CD4-positive, alpha-beta T cell (primary cell): ENCODE measurements at regions of chr17 and their contacts with region 1.

Region 1: DNA sequence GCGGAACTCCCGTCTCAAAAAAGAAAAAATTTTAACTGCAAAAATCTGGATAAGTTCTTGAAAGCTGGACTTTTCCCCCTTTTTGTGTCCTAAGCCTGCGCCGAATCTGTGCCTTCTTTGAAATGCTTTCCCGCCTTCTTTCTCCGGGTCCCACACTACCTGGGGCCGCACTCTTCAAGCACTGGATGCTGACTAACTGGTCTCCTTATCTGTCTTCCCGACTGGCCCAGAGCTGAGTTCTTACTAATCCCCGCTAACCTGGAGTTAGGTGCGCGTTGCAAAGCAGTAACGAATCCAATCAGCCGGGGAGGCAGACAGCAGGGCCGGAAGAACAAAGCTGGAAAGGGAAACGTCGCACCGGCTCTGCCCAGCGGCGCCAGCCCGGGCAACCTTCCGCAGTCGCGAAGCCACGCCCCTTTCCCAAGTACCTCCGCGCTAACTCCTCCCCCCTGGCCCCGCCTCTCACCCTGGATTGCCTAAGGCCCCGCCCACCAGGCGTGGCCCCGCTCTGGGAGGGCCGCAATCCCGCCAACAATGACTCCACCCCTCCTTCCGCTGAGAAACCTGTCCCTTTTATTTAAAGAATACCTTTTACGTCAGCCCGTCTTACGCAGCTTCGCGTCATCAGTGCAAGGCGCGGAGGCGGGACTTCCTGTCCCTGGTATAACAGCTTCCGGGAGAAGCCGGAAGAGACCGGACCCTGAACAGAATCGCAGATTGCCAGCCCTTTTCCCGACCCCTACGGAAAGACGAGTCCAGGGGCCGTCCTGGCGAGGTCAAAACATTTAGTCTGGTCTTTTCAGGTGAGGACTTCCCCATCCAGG is at the start of gene TMUB2:
- DNase-seq: peak; percentile 99 to 100 (median 99)
- ATAC-seq: peak; percentile 92
- H3K4me3 ChIP-seq: peak within 1 kb of the TSS; percentile 90
- H3K4me3 Mint-ChIP-seq: peak within 1 kb of the TSS; percentile 98
- H3K27ac ChIP-seq: peak within 1 kb of the TSS; percentile 97 to 99
- H3K27ac Mint-ChIP-seq: peak within 1 kb of the TSS; percentile 96
- H3K4me1 ChIP-seq: peaks cover 64% of the 10 kb centered on the region
- H3K4me1 Mint-ChIP-seq: peaks cover 54% of the 10 kb centered on the region
- H3K27me3 ChIP-seq: no peaks in the 10 kb centered on the region
- H3K27me3 Mint-ChIP-seq: no peaks in the 10 kb centered on the region
- CTCF ChIP-seq: no peak
- total RNA-seq, gene TMUB2: 33.3 to 34.8 TPM

Region 2: DNA sequence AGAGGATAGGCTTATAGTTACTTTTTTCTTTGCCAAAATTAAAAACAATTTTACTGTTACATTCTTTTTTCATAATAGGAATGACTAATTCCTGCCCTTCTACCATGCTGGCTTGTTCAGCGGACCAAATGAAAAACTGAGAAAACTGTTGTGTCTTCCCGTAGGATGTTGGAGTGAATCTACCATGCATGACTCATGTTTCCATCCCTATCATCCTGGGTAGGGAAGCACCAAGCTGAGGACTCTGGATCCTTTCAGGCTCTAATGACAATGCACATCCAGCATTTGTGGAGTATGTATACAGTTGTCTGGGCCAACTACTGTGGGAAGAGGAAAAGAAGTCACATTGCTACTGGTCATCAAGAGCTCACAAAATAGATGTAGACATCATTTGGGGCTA is 743.8 kb before region 1 on chr17:
- CTCF ChIA-PET with region 1: no interaction called
- POLR2A ChIA-PET with region 1: no interaction called
- intact Hi-C with region 1: no loop called
- DNase-seq: no peak
- ATAC-seq: no peak
- H3K4me3 ChIP-seq: no peak overlapping the region
- H3K4me3 Mint-ChIP-seq: no peak overlapping the region
- H3K27ac ChIP-seq: no peak overlapping the region
- H3K27ac Mint-ChIP-seq: no peak overlapping the region
- H3K4me1 ChIP-seq: no peaks in the 10 kb centered on the region
- H3K4me1 Mint-ChIP-seq: no peaks in the 10 kb centered on the region
- H3K27me3 ChIP-seq: peaks cover 0 to 4% of the 10 kb centered on the region in 2 experiments
- H3K27me3 Mint-ChIP-seq: peaks cover 15% of the 10 kb centered on the region
- CTCF ChIP-seq: no peak

Region 3: DNA sequence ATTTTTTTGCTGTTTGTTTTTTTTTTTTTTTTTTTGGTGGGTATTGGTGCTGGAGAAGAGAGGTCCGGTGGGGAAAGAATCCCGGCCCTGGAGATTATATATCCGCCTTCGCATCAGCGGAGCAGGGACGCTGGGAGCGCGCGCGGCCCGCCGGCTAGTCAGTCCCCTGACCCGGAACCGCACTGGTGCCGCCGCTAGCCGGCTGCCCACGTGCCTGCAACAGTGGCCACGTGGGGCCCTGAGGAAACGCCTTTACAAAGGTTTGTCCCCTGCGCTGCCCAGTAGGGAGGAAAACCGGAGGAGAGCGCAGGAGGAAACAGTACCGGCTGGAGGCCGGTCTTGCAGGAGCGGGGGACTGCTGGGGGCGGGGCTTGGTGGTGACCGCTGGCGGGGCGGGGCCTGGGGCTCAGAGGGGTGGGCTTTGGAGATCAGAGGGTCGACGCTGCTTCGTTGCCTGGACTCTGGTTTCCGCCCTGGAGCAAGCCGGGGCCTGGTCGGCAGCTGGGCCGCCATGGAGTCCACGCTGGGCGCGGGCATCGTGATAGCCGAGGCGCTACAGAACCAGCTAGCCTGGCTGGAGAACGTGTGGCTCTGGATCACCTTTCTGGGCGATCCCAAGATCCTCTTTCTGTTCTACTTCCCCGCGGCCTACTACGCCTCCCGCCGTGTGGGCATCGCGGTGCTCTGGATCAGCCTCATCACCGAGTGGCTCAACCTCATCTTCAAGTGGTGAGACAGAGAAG is 115.9 kb before region 1 on chr17 and contains the start of gene G6PC3:
- CTCF ChIA-PET with region 1: no interaction called
- POLR2A ChIA-PET with region 1: interaction called, 8 read pairs
- intact Hi-C with region 1: loop called in 1 of 2 experiments (anchors 5 kb)
- DNase-seq: peak; percentile 34 to 88 (median 60)
- ATAC-seq: peak; percentile 32
- H3K4me3 ChIP-seq: peak within 1 kb of the TSS; percentile 77
- H3K4me3 Mint-ChIP-seq: peak within 1 kb of the TSS; percentile 95
- H3K27ac ChIP-seq: peak within 1 kb of the TSS; percentile 61 to 71
- H3K27ac Mint-ChIP-seq: peak within 1 kb of the TSS; percentile 91
- H3K4me1 ChIP-seq: peaks cover 37% of the 10 kb centered on the region
- H3K4me1 Mint-ChIP-seq: peaks cover 49% of the 10 kb centered on the region
- H3K27me3 ChIP-seq: no peaks in the 10 kb centered on the region
- H3K27me3 Mint-ChIP-seq: no peaks in the 10 kb centered on the region
- CTCF ChIP-seq: no peak
- total RNA-seq, gene G6PC3: 5.6 to 5.8 TPM

Region 4: DNA sequence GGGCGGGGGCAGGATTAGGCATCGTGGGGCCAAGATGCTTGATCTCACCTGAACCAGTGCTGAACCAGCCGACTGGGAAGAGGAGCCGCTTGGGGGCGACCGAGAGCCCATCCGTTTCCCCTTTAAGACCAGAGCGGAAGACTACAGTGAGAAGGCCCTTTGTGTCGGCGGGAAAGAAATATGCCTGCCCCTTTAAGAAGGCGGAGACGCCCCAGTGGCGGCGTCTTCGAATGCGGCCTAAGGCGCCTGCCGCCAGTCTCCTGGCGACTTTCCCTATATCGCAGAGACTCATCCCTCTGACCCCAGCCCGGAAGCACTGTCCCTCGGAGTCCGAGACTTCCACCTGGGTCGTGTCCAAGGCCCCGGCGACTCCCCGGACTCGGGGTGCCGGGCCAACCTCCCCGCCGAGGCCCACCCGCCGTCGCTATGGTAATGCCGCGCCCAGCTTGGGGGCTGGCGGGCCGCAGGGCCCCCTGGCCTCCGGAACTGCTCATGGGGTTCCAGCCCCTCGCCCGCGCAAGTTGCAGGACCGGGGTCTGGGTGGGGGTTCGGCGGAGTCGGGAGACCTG is 44.7 kb before region 1 on chr17 and contains the start of gene HROB:
- CTCF ChIA-PET with region 1: no interaction called
- POLR2A ChIA-PET with region 1: interaction called, 7 read pairs
- intact Hi-C with region 1: loop called (anchors 1 to 2 kb)
- DNase-seq: peak; percentile 95 to 100 (median 98)
- ATAC-seq: peak; percentile 93
- H3K4me3 ChIP-seq: peak within 1 kb of the TSS; percentile 59
- H3K4me3 Mint-ChIP-seq: peak within 1 kb of the TSS; percentile 84
- H3K27ac ChIP-seq: peak within 1 kb of the TSS; percentile 41 to 59
- H3K27ac Mint-ChIP-seq: peak within 1 kb of the TSS; percentile 68
- H3K4me1 ChIP-seq: peaks cover 19% of the 10 kb centered on the region
- H3K4me1 Mint-ChIP-seq: peaks cover 7% of the 10 kb centered on the region
- H3K27me3 ChIP-seq: peaks cover 8 to 12% of the 10 kb centered on the region in 2 experiments
- H3K27me3 Mint-ChIP-seq: peaks cover 17% of the 10 kb centered on the region
- CTCF ChIP-seq: peak; percentile 86
- total RNA-seq, gene HROB: 1.6 TPM

Region 5: GRCh38 chr17:44199553-44200477 is 13.3 kb after region 1 on chr17 and contains the start of gene ATXN7L3:
- CTCF ChIA-PET with region 1: interaction called, 4 read pairs
- POLR2A ChIA-PET with region 1: interaction called, 99 read pairs
- intact Hi-C with region 1: loop called (anchors 1 kb)
- DNase-seq: peak; percentile 99 to 100 (median 99)
- ATAC-seq: peak; percentile 80
- H3K4me3 ChIP-seq: peak within 1 kb of the TSS; percentile 94
- H3K4me3 Mint-ChIP-seq: peak within 1 kb of the TSS; percentile 93
- H3K27ac ChIP-seq: peak within 1 kb of the TSS; percentile 83 to 87
- H3K27ac Mint-ChIP-seq: peak within 1 kb of the TSS; percentile 93
- H3K4me1 ChIP-seq: peaks cover 45% of the 10 kb centered on the region
- H3K4me1 Mint-ChIP-seq: peaks cover 46% of the 10 kb centered on the region
- H3K27me3 ChIP-seq: no peaks in the 10 kb centered on the region
- H3K27me3 Mint-ChIP-seq: no peaks in the 10 kb centered on the region
- CTCF ChIP-seq: no peak
- total RNA-seq, gene ATXN7L3: 85.2 to 99.2 TPM

Region 6: DNA sequence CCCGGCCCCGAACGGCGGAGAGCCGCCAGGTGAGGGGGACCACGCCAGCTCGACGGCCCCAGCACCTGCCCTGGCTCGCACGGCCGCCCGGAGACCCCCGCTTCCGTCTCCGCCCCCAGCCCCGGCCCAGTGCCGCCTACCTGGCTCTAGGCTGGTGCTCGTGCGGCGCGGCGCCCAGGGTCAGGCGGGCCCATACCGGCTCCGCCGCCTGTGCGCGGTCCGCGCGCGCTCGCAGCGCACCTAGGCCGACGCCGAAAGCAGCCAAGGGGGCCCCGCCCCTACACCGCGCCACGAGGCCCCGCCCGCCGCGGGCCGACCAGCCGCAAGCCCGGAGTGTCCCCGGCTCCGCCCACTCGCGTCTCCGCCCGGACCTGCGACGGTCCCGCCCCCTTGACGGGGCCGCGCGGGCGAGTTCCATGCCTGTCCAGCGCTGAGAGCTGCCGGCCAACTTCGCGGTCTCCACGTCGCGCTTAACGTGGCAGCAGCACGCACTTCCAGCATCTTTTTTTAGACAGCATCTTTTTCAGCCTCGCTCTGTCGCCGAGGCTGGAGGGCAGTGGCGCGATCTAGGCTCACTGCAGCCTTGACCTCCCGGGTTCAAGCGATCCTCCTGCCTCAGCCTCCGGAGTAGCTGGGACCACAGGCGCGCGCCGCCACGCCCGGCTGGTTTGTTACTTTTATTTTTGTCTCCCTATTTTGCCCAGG is 138.2 kb after region 1 on chr17 and contains the start of gene SLC25A39:
- CTCF ChIA-PET with region 1: no interaction called
- POLR2A ChIA-PET with region 1: interaction called, 17 read pairs
- intact Hi-C with region 1: loop called in 1 of 2 experiments (anchors 1 kb)
- DNase-seq: peak; percentile 87 to 97 (median 94)
- ATAC-seq: peak; percentile 69
- H3K4me3 ChIP-seq: peak within 1 kb of the TSS; percentile 85
- H3K4me3 Mint-ChIP-seq: peak within 1 kb of the TSS; percentile 95
- H3K27ac ChIP-seq: peak within 1 kb of the TSS; percentile 83 to 90
- H3K27ac Mint-ChIP-seq: peak within 1 kb of the TSS; percentile 96
- H3K4me1 ChIP-seq: peaks cover 44% of the 10 kb centered on the region
- H3K4me1 Mint-ChIP-seq: peaks cover 27% of the 10 kb centered on the region
- H3K27me3 ChIP-seq: no peaks in the 10 kb centered on the region
- H3K27me3 Mint-ChIP-seq: no peaks in the 10 kb centered on the region
- CTCF ChIP-seq: no peak
- total RNA-seq, gene SLC25A39: 55.5 to 65.5 TPM